ENCODE measurements at regions of chr10 and their contacts with region 1.

Region 1: GRCh38 chr10:101782811-101783735 is at the start of gene NPM3:
- DNase-seq: peak; percentile 87
- total RNA-seq, gene NPM3: 8.9 TPM

Region 2: GRCh38 chr10:101602761-101603398 is 180.2 kb before region 1 on chr10:
- intact Hi-C with region 1: loop called (anchors 2 kb)
- DNase-seq: no peak

Region 3: GRCh38 chr10:101818119-101818871 is 35.2 kb after region 1 on chr10 and contains the start of gene OGA:
- intact Hi-C with region 1: loop called (anchors 2 kb)
- DNase-seq: peak; percentile 99
- total RNA-seq, gene OGA: 77.6 TPM

Region 4: GRCh38 chr10:102291221-102291905 is 508.3 kb after region 1 on chr10:
- intact Hi-C with region 1: no loop called
- DNase-seq: no peak